ENCODE measurements at regions of chr6 and their contacts with region 1.

Region 1: GRCh38 chr6:71608646-71609045 is 277.7 kb upstream of the RIMS1 start:
- DNase-seq: no peak
- H3K4me3 ChIP-seq: no peak overlapping the region
- H3K27ac ChIP-seq: no peak overlapping the region
- H3K4me1 ChIP-seq: no peaks in the 10 kb centered on the region
- H3K27me3 ChIP-seq: no peaks in the 10 kb centered on the region
- CTCF ChIP-seq: no peak

Region 2: DNA sequence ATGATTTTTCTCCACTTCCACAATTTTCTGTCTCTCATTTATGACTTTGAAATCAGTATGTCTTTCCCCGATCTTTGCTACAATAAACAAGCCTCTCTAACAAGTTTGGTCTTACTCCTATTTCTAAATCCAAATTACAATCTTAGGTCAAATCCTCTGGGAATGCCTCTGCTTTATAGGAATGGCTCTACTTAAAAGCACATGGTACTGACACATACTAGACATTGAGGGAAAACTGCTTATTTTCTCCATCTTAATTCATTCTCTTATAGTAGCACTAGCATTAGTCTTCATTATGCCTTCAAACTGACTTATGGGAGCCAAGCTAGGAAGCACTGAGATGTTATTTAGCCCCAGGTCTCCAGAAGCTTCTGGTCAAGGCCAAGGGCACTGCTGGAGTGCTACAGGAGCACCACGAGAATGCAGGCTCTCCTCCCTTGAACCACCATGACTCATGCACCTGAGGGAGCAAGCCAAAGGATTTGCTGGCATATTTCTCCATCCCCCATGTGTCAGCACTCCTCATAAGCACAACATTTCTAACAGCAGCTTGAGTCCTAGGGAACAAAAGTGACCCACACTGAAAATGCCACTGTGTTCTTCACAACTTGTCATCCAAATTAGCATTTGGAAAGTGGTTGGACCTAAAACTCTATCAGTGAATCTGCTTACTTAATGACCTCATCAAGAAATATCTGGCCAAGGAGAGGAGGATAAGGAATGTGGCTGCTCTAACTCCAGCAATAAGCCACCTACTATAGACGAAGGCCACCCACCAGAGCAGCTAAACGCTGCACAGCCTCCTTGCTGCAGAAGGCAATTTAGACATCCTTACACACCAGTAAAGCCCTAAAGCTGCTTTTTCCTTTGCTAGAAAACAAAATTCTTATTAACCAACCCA is 856.4 kb after region 1 on chr6:
- CTCF ChIA-PET with region 1: no interaction called
- POLR2A ChIA-PET with region 1: interaction called, 14 read pairs
- intact Hi-C with region 1: no loop called
- DNase-seq: no peak
- H3K4me3 ChIP-seq: no peak overlapping the region
- H3K27ac ChIP-seq: no peak overlapping the region
- H3K4me1 ChIP-seq: no peaks in the 10 kb centered on the region
- H3K27me3 ChIP-seq: no peaks in the 10 kb centered on the region
- CTCF ChIP-seq: no peak